ENCODE measurements at regions of chr7 and their contacts with region 1.

Region 1: GRCh38 chr7:16564909-16565426 is 38.3 kb downstream of the LRRC72 start:
- DNase-seq: peak; percentile 42
- ATAC-seq: peak; percentile 74
- H3K4me3 Mint-ChIP-seq: no peak overlapping the region
- H3K27ac Mint-ChIP-seq: no peak overlapping the region
- H3K4me1 Mint-ChIP-seq: peaks cover 9% of the 10 kb centered on the region
- H3K27me3 Mint-ChIP-seq: no peaks in the 10 kb centered on the region
- CTCF ChIP-seq: peak; percentile 35; the same call in 1 of the 2 replicates

Region 2: DNA sequence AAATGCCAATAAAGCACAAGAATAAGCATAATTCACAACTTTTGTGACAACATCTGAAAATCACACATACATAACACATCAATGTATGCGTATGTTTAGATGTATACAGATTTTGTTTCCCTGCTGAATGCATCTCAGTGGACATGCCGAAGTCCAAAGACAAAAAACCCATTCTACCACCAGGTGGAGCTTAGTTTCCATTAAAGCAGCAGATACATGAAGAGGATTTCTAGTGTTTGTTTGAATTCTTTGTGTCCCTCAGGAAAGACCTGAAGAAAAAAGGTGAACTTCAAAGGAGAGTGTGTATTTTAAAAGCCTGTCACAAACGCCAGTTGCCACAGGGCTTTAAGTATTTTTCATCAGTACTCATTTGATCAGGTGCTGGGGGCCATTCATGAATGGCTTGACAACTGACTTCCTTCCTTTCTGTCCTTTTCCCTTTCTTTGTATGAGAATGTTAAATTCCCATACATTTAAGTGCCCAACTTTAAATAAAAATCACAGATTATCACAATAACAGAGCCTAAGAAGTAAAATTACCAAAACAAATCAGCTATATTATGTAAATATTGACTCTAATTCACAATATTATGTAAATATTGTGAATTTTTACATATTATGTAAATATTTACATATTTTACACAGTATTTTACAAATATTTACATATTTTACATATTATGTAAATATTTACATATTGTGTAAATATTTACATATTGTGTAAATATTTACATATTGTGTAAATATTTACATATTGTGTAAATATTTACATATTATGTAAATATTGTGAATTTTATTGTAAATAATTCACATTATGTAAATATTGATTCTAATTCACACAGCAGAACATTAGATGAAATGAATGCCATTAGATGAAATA is 486.7 kb before region 1 on chr7:
- CTCF ChIA-PET with region 1: interaction called, 10 read pairs
- POLR2A ChIA-PET with region 1: no interaction called
- DNase-seq: no peak
- ATAC-seq: peak; percentile 80
- H3K4me3 Mint-ChIP-seq: no peak overlapping the region
- H3K27ac Mint-ChIP-seq: peak overlapping the region; percentile 62; the same call in 1 of the 2 replicates
- H3K4me1 Mint-ChIP-seq: peaks cover 13% of the 10 kb centered on the region
- H3K27me3 Mint-ChIP-seq: no peaks in the 10 kb centered on the region
- CTCF ChIP-seq: peak; percentile 47

Region 3: DNA sequence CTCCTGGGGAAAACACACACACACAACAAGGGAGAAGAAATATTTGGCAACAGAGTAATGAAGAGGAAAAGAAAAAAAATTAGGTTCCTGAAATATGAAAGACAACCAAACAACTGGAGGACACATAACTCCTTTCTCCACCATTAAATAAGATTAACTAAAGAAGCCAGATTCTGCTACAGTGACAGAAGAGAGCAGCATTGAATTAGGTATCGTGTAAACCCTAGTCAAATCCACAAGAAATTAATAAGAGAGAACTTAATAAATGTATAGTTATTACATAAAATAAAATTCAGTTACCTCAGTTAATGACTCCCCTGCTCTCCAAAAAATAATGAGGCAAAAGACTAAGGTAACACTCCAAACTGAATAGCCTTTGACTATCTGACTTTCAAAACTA is 450.3 kb before region 1 on chr7:
- CTCF ChIA-PET with region 1: interaction called, 10 read pairs
- POLR2A ChIA-PET with region 1: no interaction called
- DNase-seq: no peak
- ATAC-seq: peak; percentile 53
- H3K4me3 Mint-ChIP-seq: no peak overlapping the region
- H3K27ac Mint-ChIP-seq: no peak overlapping the region
- H3K4me1 Mint-ChIP-seq: no peaks in the 10 kb centered on the region
- H3K27me3 Mint-ChIP-seq: no peaks in the 10 kb centered on the region
- CTCF ChIP-seq: no peak

Region 4: DNA sequence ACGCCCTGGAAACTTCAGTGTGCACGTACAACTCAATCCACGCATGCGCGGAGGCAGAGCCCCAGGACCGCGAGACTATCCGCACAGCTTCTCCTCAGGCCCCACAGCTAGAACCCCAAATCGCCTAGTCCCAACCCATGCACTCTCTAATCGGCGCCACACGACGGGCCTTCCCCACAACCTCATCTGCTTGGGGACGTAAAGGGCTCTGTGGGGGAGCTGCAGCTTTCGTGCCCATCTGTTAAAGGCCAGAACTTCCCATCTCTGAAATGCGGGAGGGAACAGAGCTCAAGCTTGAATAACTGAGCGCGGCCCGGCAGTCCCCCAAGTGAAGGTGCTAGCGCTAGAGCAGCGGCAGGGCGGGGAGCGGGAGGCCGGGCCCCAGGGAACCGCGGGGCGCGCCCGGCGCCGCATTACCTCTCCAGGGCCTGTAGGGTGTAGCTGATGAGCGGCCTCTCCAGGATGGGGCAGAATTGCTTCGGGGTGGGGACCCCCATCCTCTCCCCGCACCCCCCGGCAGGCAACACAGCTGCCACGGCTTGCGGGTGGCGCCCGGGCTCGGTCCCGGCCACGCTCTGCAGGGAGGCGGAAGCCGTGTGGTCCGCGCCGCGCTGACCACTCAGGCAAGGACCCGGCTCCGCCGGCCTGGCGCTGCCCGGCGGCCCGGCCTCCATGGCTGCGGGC is 144.2 kb before region 1 on chr7:
- CTCF ChIA-PET with region 1: interaction called, 27 read pairs
- POLR2A ChIA-PET with region 1: interaction called, 3 read pairs
- DNase-seq: peak; percentile 76
- ATAC-seq: peak; percentile 89
- H3K4me3 Mint-ChIP-seq: peak overlapping the region; percentile 78
- H3K27ac Mint-ChIP-seq: peak overlapping the region; percentile 32; the same call in 1 of the 2 replicates
- H3K4me1 Mint-ChIP-seq: peaks cover 16% of the 10 kb centered on the region
- H3K27me3 Mint-ChIP-seq: peaks cover 27% of the 10 kb centered on the region
- CTCF ChIP-seq: no peak

Region 5: DNA sequence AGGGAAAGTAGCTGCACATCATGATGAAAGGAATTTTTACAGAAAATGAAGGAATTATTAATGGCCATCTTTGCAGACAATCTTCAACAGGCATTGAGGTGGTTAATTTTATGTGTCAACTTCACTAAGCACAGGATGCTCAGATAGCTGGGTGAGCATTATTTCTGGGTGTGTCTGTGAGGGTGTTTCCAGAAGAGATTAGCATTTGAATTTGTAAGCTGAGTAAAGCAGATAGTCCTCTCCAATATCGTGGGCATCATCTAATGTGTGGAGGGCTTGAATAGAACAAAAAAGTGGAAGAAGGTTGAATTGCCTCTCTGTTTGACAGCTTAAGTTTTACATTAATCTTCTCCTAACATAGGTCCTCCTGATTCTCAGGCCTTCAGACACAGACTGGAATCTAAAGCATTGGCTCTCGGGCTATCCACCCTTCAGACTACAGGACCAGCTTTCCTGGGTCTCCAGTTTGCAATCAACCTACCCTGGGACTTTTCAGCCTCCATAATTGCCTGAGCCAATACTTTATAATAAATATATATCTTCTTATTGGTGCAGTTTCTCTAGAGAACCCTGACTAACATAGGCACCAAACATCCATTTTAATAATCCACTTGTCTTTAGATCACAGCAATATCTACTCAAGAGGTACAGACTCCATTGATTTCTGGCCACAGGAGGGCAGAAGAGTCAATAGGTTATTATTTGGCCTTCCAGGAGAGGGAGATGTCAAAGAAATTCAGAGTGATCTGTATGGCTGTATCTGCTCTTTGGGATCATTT is 133.1 kb before region 1 on chr7:
- CTCF ChIA-PET with region 1: interaction called, 57 read pairs
- POLR2A ChIA-PET with region 1: interaction called, 3 read pairs
- DNase-seq: no peak
- ATAC-seq: peak; percentile 92
- H3K4me3 Mint-ChIP-seq: no peak overlapping the region
- H3K27ac Mint-ChIP-seq: no peak overlapping the region
- H3K4me1 Mint-ChIP-seq: no peaks in the 10 kb centered on the region
- H3K27me3 Mint-ChIP-seq: no peaks in the 10 kb centered on the region
- CTCF ChIP-seq: no peak; the same call in 1 of the 2 replicates

Region 6: GRCh38 chr7:16465469-16466361 is 99.3 kb before region 1 on chr7 and contains the start of gene SOSTDC1:
- CTCF ChIA-PET with region 1: interaction called, 20 read pairs
- POLR2A ChIA-PET with region 1: no interaction called
- DNase-seq: no peak
- ATAC-seq: peak; percentile 91
- H3K4me3 Mint-ChIP-seq: 0 out of 2 replicates have a peak within 1 kb of the TSS, but pooled peaks have one; percentile 28
- H3K27ac Mint-ChIP-seq: peak within 1 kb of the TSS; percentile 95
- H3K4me1 Mint-ChIP-seq: peaks cover 37% of the 10 kb centered on the region
- H3K27me3 Mint-ChIP-seq: no peaks in the 10 kb centered on the region
- CTCF ChIP-seq: no peak
- total RNA-seq, gene SOSTDC1: 0.09 to 0.23 TPM (median 0.15 TPM) in 3 replicates